Panc1 (cell line): ENCODE measurements at regions of chr14 and their contacts with region 1.

Region 1: GRCh38 chr14:24231263-24232120 is 675 bp downstream of the NEDD8 start:
- DNase-seq: no peak
- ATAC-seq: peak; percentile 2; the same call in 1 of the 2 replicates
- H3K4me3 ChIP-seq: peak overlapping the region; percentile 87 to 89
- H3K27ac ChIP-seq: peak overlapping the region; percentile 96
- H3K4me1 ChIP-seq: peaks cover 18% of the 10 kb centered on the region
- H3K27me3 ChIP-seq: no peaks in the 10 kb centered on the region
- CTCF ChIP-seq: no peak

Region 2: GRCh38 chr14:24114536-24115450 is 116.7 kb before region 1 on chr14 and contains the starts of genes DCAF11 and NRL:
- CTCF ChIA-PET with region 1: no interaction called
- POLR2A ChIA-PET with region 1: interaction called, 13 read pairs
- in situ Hi-C with region 1: no loop called
- intact Hi-C with region 1: no loop called
- DNase-seq: peak; percentile 95
- ATAC-seq: peak; percentile 95
- H3K4me3 ChIP-seq: peak within 1 kb of the TSS; percentile 86 to 98
- H3K27ac ChIP-seq: peak within 1 kb of the TSS; percentile 95
- H3K4me1 ChIP-seq: no peaks in the 10 kb centered on the region
- H3K27me3 ChIP-seq: no peaks in the 10 kb centered on the region
- CTCF ChIP-seq: no peak
- total RNA-seq, gene DCAF11: 37.4 TPM
- total RNA-seq, gene NRL: 1.4 TPM